ENCODE measurements at regions of chr11 and their contacts with region 1.

Region 1: DNA sequence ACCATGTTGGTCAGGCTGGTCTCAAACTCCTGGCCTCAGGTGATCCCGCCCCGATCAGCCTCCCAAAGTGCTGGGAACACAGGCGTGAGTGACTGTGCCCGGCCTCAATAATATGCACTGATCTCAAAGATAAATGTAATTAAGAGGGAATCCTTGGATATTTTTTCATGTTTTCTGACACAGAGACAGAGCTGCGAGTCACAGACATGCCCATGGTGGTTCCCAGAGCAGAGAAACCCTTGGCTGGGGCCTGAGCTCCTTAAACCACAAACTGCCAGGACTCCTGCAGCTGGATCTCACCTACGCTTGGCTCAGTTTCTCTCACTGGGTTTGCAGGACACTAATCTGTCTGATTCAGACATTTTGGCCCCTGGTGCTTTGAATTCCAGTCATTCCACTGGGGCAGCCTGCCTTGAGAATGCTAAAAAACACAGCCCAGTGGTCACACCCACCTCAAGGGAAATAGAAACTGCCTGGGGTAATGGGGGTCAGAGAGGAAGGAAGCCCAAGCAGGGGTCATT is 122.6 kb downstream of the CCDC81 start:
- DNase-seq: no peak

Region 2: GRCh38 chr11:84607975-84608836 is 1889.0 kb before region 1 on chr11:
- intact Hi-C with region 1: loop called in 1 of 2 experiments (anchors 10 kb)
- DNase-seq: no peak

Region 3: DNA sequence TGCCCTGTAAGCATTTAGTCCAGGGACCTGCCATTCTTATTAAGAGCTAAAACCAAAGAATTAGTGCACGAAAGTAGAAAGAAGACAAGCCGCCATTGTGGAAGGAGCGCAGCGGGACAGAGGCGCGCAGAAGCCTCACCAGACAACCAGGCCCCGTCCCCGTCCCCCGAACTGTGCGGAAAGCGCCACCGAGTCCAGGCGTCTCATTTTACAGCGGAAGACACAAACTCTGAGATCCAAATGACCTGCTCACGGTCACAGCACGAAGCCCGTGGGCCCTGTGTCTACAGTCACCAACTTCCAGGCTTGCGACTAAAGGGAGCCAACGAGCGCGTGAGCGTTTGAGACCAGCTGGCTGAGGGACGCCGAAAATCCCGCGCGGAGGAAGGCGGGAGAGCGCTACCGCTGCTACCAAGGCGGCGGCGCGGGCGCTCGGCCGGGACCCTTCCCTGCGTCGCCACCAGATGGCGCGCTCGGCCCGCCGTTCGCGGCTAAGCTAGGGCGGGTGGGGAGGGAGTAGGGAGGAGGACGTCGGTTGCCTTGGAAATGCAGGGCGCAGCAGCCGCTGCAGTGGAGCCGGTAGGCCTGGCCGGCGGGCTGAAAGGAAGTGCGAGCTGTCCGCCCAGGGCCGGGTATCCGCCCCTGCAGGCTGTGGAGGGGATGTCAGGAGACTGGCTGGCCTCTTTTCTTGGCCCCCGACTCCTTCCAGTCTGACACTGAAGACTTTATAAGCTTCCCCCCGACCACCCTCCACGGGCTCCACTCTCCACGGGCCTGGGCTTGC is 642.5 kb before region 1 on chr11:
- intact Hi-C with region 1: no loop called
- DNase-seq: peak; percentile 98

Region 4: GRCh38 chr11:87739766-87740165 is 1242.5 kb after region 1 on chr11:
- intact Hi-C with region 1: no loop called
- DNase-seq: no peak